CD4-positive, alpha-beta memory T cell (primary cell): ENCODE measurements at regions of chr16 and their contacts with region 1.

Region 1: GRCh38 chr16:8963825-8964441 is at the start of gene USP7:
- DNase-seq: peak; percentile 91 to 92 (median 91)
- H3K4me3 ChIP-seq: peak within 1 kb of the TSS; percentile 51 to 67
- H3K4me3 Mint-ChIP-seq: peak within 1 kb of the TSS; percentile 86 to 98 (median 94)
- H3K27ac ChIP-seq: peak within 1 kb of the TSS; percentile 65
- H3K27ac Mint-ChIP-seq: peak within 1 kb of the TSS; percentile 6 to 98 (median 82)
- H3K4me1 ChIP-seq: peaks cover 38% of the 10 kb centered on the region
- H3K4me1 Mint-ChIP-seq: peaks cover 32 to 47% (median 37%) of the 10 kb centered on the region in 4 donors
- H3K27me3 ChIP-seq: no peaks in the 10 kb centered on the region
- H3K27me3 Mint-ChIP-seq: no peaks in the 10 kb centered on the region
- total RNA-seq, gene USP7: 194 to 206 TPM

Region 2: GRCh38 chr16:8621572-8622314 is 342.2 kb before region 1 on chr16 and contains the start of gene METTL22:
- CTCF ChIA-PET with region 1: no interaction called
- POLR2A ChIA-PET with region 1: no interaction called
- intact Hi-C with region 1: loop called (anchors 1 kb)
- DNase-seq: peak; percentile 87 to 90 (median 90)
- H3K4me3 ChIP-seq: peak within 1 kb of the TSS; percentile 71 to 96
- H3K4me3 Mint-ChIP-seq: peak within 1 kb of the TSS; percentile 89 to 98 (median 94)
- H3K27ac ChIP-seq: peak within 1 kb of the TSS; percentile 92
- H3K27ac Mint-ChIP-seq: peak within 1 kb of the TSS; percentile 77 to 94 (median 91)
- H3K4me1 ChIP-seq: peaks cover 15% of the 10 kb centered on the region
- H3K4me1 Mint-ChIP-seq: peaks cover 11 to 32% (median 15%) of the 10 kb centered on the region in 4 donors
- H3K27me3 ChIP-seq: no peaks in the 10 kb centered on the region
- H3K27me3 Mint-ChIP-seq: peaks cover 0 to 5% of the 10 kb centered on the region in 2 donors
- total RNA-seq, gene METTL22: 42.9 to 49.8 TPM

Region 3: GRCh38 chr16:8797364-8798173 is 166.4 kb before region 1 on chr16 and contains the starts of genes PMM2 and TMEM186:
- CTCF ChIA-PET with region 1: interaction called, 4 read pairs
- POLR2A ChIA-PET with region 1: no interaction called
- intact Hi-C with region 1: loop called (anchors 1 kb)
- DNase-seq: peak; percentile 93 to 97 (median 94)
- H3K4me3 ChIP-seq: peak within 1 kb of the TSS; percentile 73 to 97
- H3K4me3 Mint-ChIP-seq: peak within 1 kb of the TSS; percentile 93 to 98 (median 95)
- H3K27ac ChIP-seq: peak within 1 kb of the TSS; percentile 81
- H3K27ac Mint-ChIP-seq: peak within 1 kb of the TSS; percentile 88 to 97 (median 94)
- H3K4me1 ChIP-seq: peaks cover 44% of the 10 kb centered on the region
- H3K4me1 Mint-ChIP-seq: peaks cover 24 to 55% (median 33%) of the 10 kb centered on the region in 4 donors
- H3K27me3 ChIP-seq: no peaks in the 10 kb centered on the region
- H3K27me3 Mint-ChIP-seq: no peaks in the 10 kb centered on the region
- total RNA-seq, gene PMM2: 51.7 to 61.7 TPM
- total RNA-seq, gene TMEM186: 15.6 to 17.9 TPM

Region 4: GRCh38 chr16:8905168-8905762 is 58.7 kb before region 1 on chr16:
- CTCF ChIA-PET with region 1: no interaction called
- POLR2A ChIA-PET with region 1: interaction called, 3 read pairs
- intact Hi-C with region 1: loop called (anchors 5 kb)
- DNase-seq: peak in 3 of 5 donors; percentile 16 to 27 (median 23)
- H3K4me3 ChIP-seq: no peak overlapping the region
- H3K4me3 Mint-ChIP-seq: no peak overlapping the region
- H3K27ac ChIP-seq: no peak overlapping the region
- H3K27ac Mint-ChIP-seq: peak overlapping the region in 4 of 7 donors; percentile 17 to 87 (median 30)
- H3K4me1 ChIP-seq: peaks cover 13% of the 10 kb centered on the region
- H3K4me1 Mint-ChIP-seq: peaks cover 14 to 19% (median 16%) of the 10 kb centered on the region in 4 donors
- H3K27me3 ChIP-seq: no peaks in the 10 kb centered on the region
- H3K27me3 Mint-ChIP-seq: no peaks in the 10 kb centered on the region

Region 5: GRCh38 chr16:8936421-8936820 is 27.5 kb before region 1 on chr16:
- CTCF ChIA-PET with region 1: interaction called, 25 read pairs
- POLR2A ChIA-PET with region 1: interaction called, 9 read pairs
- intact Hi-C with region 1: loop called (anchors 1 kb)
- DNase-seq: peak; percentile 58 to 82 (median 66)
- H3K4me3 ChIP-seq: no peak overlapping the region
- H3K4me3 Mint-ChIP-seq: peak overlapping the region in 4 of 8 donors; percentile 39 to 62 (median 48)
- H3K27ac ChIP-seq: no peak overlapping the region
- H3K27ac Mint-ChIP-seq: peak overlapping the region; percentile 2 to 49 (median 26)
- H3K4me1 ChIP-seq: peaks cover 76% of the 10 kb centered on the region
- H3K4me1 Mint-ChIP-seq: peaks cover 70 to 89% (median 79%) of the 10 kb centered on the region in 4 donors
- H3K27me3 ChIP-seq: no peaks in the 10 kb centered on the region
- H3K27me3 Mint-ChIP-seq: no peaks in the 10 kb centered on the region

Region 6: GRCh38 chr16:9072806-9073341 is 108.9 kb after region 1 on chr16:
- CTCF ChIA-PET with region 1: no interaction called
- POLR2A ChIA-PET with region 1: no interaction called
- intact Hi-C with region 1: no loop called
- DNase-seq: no peak
- H3K4me3 ChIP-seq: no peak overlapping the region
- H3K4me3 Mint-ChIP-seq: no peak overlapping the region
- H3K27ac ChIP-seq: no peak overlapping the region
- H3K27ac Mint-ChIP-seq: peak overlapping the region in 1 of 7 donors; percentile 43
- H3K4me1 ChIP-seq: no peaks in the 10 kb centered on the region
- H3K4me1 Mint-ChIP-seq: peaks cover 3 to 11% (median 6%) of the 10 kb centered on the region in 4 donors
- H3K27me3 ChIP-seq: no peaks in the 10 kb centered on the region
- H3K27me3 Mint-ChIP-seq: peaks cover 1 to 3% of the 10 kb centered on the region in 2 donors